T-cell (primary cell): ENCODE measurements at regions of chr12 and their contacts with region 1.

Region 1: GRCh38 chr12:124906606-124907261 is 7.7 kb downstream of the UBC start:
- DNase-seq: peak; percentile 64 to 96 (median 86)
- ATAC-seq: peak; percentile 73 to 95 (median 90)
- H3K4me3 ChIP-seq: no peak overlapping the region
- H3K4me3 Mint-ChIP-seq: no peak overlapping the region
- H3K27ac ChIP-seq: peak overlapping the region; percentile 42
- H3K27ac Mint-ChIP-seq: peak overlapping the region; percentile 70 to 71
- H3K4me1 ChIP-seq: peaks cover 12 to 16% of the 10 kb centered on the region in 2 experiments
- H3K4me1 Mint-ChIP-seq: peaks cover 27 to 30% (median 29%) of the 10 kb centered on the region in 3 donors
- H3K27me3 ChIP-seq: no peaks in the 10 kb centered on the region
- H3K27me3 Mint-ChIP-seq: no peaks in the 10 kb centered on the region

Region 2: DNA sequence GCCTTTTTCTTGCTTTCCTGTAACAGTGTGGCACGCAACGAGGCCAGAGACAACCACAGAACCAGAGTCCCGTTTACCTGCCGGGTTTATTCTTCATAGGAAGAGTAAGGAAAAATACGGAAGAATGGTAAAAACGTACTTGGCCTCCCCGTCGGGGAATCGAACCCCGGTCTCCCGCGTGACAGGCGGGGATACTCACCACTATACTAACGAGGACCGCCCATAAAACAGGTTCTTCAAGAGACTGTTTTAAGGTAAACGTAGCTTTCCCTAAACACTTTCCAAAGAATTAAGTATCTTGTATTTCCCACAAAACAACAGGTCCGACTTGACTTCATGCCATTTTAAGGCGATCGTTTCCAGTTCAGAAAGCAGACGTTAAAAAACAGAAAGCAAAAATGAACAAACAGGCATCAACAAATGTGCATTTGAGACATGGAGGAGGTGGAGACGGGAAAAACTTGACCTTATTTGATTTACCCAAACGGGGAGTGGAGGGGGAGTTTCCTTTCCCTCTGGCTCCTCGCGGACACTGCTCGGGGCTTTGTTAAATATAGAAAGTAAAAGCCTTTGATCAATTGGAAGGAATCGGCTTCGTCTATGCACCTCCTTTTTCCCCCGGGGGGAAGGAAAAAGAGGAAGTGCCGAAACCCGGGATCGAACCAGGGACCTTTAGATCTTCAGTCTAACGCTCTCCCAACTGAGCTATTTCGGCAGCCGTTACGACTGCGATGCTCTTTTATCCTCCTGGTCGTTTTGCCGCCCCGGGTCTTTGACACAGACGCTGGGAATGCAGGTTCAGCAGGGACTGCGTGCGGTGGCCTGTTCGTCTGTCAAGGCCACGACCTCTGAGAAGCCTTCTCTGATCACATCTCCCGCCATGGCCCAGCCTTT is 20.7 kb after region 1 on chr12:
- CTCF ChIA-PET with region 1: interaction called, 13 read pairs
- POLR2A ChIA-PET with region 1: interaction called, 3 to 5 read pairs
- DNase-seq: peak; percentile 76 to 93 (median 90)
- ATAC-seq: peak; percentile 83 to 89 (median 84)
- H3K4me3 ChIP-seq: peak overlapping the region; percentile 58 to 79
- H3K4me3 Mint-ChIP-seq: peak overlapping the region; percentile 84 to 89 (median 86)
- H3K27ac ChIP-seq: peak overlapping the region; percentile 72
- H3K27ac Mint-ChIP-seq: peak overlapping the region; percentile 97 to 99
- H3K4me1 ChIP-seq: peaks cover 11 to 34% of the 10 kb centered on the region in 2 experiments
- H3K4me1 Mint-ChIP-seq: peaks cover 29 to 34% (median 31%) of the 10 kb centered on the region in 3 donors
- H3K27me3 ChIP-seq: no peaks in the 10 kb centered on the region
- H3K27me3 Mint-ChIP-seq: peaks cover 3 to 8% of the 10 kb centered on the region in 2 donors